Activated T-helper 1 cell treated with anti-CD3 and anti-CD28 coated beads, Interleukin-12 subunit alpha, Interleukin-12 subunit beta, Interleukin-2, Interleukin-4 antibody, amounts not matched to agents 30 ng/mL and 10 ng/mL and 1 ng/mL, durations not matched to agents 14 hours and 24 hours and 36 hours (primary cell): ENCODE measurements at regions of chr3 and their contacts with region 1.

Region 1: GRCh38 chr3:188914552-188914951 is 257.2 kb upstream of the TPRG1 start:
- DNase-seq: no peak
- H3K4me3 Mint-ChIP-seq: peak overlapping the region; percentile 34
- H3K27ac Mint-ChIP-seq: peak overlapping the region; percentile 88
- H3K4me1 Mint-ChIP-seq: peaks cover 46% of the 10 kb centered on the region
- H3K27me3 Mint-ChIP-seq: no peaks in the 10 kb centered on the region

Region 2: GRCh38 chr3:187802928-187803259 is 1111.7 kb before region 1 on chr3:
- intact Hi-C with region 1: loop called (anchors 1 kb)
- DNase-seq: peak; percentile 78
- H3K4me3 Mint-ChIP-seq: peak overlapping the region; percentile 65
- H3K27ac Mint-ChIP-seq: peak overlapping the region; percentile 90
- H3K4me1 Mint-ChIP-seq: peaks cover 96% of the 10 kb centered on the region
- H3K27me3 Mint-ChIP-seq: no peaks in the 10 kb centered on the region

Region 3: DNA sequence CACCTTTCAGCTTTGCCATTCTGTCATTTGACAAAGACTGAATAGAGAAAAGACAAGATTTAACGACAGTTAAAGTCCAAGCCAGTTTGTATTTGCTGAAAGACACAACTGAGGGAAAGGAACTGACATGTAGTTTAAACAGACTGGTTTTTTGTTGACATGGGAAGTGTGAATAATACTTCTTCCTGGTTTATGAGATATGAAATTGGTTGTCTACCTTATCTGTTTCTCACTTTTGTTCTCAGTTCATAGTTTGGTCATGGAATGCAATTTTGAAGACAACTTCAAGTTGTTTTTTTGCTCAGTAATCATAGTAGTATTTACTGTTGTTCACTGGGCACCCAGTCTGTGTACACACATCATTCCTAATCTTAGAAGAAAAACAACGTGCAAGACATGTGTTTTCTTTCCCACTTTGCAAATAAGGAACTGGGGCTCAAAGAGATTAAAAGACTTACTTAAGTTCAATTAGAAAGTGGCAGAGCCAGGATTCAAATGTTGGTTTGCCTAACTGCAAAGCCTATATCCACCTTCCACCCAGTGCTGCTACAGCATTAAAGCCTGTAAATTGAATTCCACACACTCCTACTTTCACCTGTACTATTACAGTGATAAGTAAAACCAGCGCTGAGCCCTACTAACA is 657.0 kb before region 1 on chr3:
- intact Hi-C with region 1: loop called (anchors 1 kb)
- DNase-seq: no peak
- H3K4me3 Mint-ChIP-seq: no peak overlapping the region
- H3K27ac Mint-ChIP-seq: peak overlapping the region; percentile 63
- H3K4me1 Mint-ChIP-seq: peaks cover 62% of the 10 kb centered on the region
- H3K27me3 Mint-ChIP-seq: peaks cover 2% of the 10 kb centered on the region

Region 4: GRCh38 chr3:188339410-188340295 is 574.9 kb before region 1 on chr3:
- intact Hi-C with region 1: loop called (anchors 1 kb)
- DNase-seq: peak; percentile 39
- H3K4me3 Mint-ChIP-seq: peak overlapping the region; percentile 63
- H3K27ac Mint-ChIP-seq: peak overlapping the region; percentile 86
- H3K4me1 Mint-ChIP-seq: peaks cover 37% of the 10 kb centered on the region
- H3K27me3 Mint-ChIP-seq: peaks cover 24% of the 10 kb centered on the region

Region 5: DNA sequence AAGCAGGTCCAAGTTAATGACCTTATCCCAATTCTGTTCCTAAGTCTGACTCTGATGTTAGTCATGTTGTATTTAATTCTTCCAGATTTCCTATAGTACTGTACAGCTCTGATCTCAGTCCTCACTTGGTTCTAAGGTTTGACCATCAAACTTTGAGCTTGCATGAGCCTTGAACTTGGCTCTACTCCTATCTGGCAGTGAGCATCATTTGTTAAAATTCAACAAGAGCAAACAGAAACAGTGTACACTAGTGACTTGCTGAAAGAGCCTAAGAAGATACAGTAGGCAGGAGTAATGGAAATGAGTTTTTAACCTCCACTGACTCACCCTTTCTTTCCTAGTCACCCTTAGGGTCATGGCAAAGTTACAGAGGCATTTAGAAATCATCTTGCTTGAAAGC is 193.9 kb before region 1 on chr3:
- intact Hi-C with region 1: loop called (anchors 1 kb)
- DNase-seq: no peak
- H3K4me3 Mint-ChIP-seq: no peak overlapping the region
- H3K27ac Mint-ChIP-seq: no peak overlapping the region
- H3K4me1 Mint-ChIP-seq: peaks cover 35% of the 10 kb centered on the region
- H3K27me3 Mint-ChIP-seq: peaks cover 2% of the 10 kb centered on the region

Region 6: DNA sequence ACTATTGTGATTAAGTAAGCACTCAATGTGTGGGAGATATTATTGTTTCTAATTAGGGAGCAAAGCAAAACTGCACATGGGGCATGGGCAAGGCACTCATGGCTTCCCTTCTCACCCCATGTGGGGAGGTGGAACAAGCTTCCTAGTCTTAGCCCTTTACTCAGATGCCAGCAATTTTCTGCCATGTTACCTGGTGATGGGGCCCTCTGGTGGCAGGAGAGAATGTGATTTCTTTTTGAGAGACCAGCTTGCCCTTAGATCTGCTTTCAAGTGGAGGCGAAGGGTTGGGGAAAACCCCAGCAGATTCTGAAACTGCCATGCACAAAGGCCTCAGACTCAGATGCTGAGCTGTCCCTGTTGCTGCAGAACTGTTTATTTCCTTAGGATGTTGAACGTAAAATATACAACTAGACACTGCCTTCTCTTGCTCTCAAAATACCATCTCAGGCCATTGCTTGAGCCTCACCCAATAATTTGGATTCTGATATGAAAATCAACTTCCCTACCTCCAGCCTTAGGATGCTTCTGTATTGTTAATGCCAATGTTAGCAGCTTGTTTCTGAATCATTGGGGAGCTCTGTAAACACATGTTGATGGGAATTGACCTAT is 127.0 kb after region 1 on chr3:
- intact Hi-C with region 1: loop called (anchors 1 kb)
- DNase-seq: peak; percentile 75
- H3K4me3 Mint-ChIP-seq: no peak overlapping the region
- H3K27ac Mint-ChIP-seq: no peak overlapping the region
- H3K4me1 Mint-ChIP-seq: peaks cover 56% of the 10 kb centered on the region
- H3K27me3 Mint-ChIP-seq: peaks cover 4% of the 10 kb centered on the region